Panc1 (cell line): ENCODE measurements at regions of chr20 and their contacts with region 1.

Region 1: DNA sequence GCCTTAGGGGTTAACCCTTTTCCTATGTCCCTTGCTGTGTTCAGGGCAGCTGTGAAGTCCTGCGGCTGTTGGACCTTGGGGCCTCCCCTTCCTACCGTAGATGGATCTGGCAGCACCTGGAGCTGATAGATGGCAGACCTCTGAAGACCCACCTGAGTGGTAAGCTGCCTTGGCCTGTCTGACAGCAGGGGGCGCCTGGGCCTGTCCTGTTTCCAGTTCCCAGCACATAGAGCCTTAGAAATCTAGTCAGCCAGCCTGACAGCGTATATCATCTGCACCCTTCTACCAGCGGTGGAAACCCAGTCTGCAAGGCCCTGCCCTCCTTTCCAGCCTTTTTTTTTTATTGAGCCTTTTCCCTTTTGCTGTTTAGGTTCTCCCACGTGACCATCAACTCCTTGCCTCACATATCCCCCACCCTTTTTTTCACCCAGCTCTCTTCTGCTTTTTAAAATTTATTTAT is 26.6 kb downstream of the CNBD2 start:
- DNase-seq: peak; percentile 69
- ATAC-seq: peak; percentile 96
- H3K4me3 ChIP-seq: no peak overlapping the region
- H3K27ac ChIP-seq: no peak overlapping the region
- H3K4me1 ChIP-seq: no peaks in the 10 kb centered on the region; the same call in 1 of the 2 replicates
- H3K27me3 ChIP-seq: no peaks in the 10 kb centered on the region
- CTCF ChIP-seq: peak; percentile 95

Region 2: DNA sequence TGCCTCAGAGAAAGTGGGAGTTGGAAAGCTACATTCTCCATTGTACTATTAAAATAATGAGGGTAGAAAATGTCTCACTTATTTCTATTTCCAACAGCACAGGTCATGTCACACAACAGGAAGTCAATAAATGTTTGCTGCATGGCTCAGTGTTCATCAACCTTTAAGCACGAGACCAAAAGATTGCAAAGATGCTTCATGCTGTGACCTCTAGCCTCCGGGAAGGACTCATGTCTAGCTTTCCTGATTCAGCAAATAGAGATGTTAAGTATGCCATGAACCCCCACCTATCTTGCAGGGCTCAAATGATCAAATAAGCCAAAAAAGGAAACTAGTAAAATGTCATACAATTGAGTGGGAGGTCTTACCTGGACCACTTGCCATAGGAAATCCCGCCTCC is 1226.9 kb before region 1 on chr20:
- CTCF ChIA-PET with region 1: no interaction called
- POLR2A ChIA-PET with region 1: no interaction called
- in situ Hi-C with region 1: no loop called
- intact Hi-C with region 1: no loop called
- DNase-seq: no peak
- ATAC-seq: no peak
- H3K4me3 ChIP-seq: no peak overlapping the region
- H3K27ac ChIP-seq: no peak overlapping the region
- H3K4me1 ChIP-seq: no peaks in the 10 kb centered on the region
- H3K27me3 ChIP-seq: no peaks in the 10 kb centered on the region
- CTCF ChIP-seq: no peak

Region 3: DNA sequence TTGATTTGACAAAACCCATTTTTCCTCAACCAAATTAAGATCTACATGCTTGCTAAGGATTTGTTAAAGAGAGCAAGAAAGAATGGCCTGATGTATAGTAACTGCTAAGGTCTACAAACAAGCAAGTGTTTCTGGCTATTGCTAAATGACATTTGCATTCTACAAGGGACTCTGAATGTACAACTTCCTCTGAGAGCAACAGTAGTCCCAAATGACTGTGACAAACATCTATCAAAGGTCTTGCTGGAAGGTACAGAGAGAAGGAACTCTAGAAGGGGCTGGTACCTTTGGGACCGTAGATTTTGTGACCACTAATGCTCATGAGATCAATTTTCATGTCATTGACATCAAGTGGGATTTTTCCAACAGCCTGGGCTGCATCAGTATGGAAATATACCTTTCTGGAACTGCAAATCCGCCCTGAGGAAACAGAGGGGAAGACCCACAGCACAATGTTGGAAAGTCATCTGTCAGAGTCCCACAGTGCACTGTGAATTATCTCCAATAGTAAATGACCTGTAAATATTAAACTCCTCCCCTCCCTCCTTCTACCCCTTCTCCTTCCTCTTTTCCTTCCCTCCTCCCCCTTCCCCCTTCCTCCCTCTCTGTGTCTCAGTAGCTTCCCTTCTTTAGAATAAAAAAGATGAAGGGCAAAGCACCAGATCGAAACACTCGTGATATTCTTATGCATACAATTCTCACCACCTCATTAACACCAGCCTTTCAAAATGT is 314.4 kb before region 1 on chr20:
- CTCF ChIA-PET with region 1: no interaction called
- POLR2A ChIA-PET with region 1: no interaction called
- in situ Hi-C with region 1: no loop called
- intact Hi-C with region 1: no loop called
- DNase-seq: no peak
- ATAC-seq: no peak
- H3K4me3 ChIP-seq: no peak overlapping the region
- H3K27ac ChIP-seq: no peak overlapping the region
- H3K4me1 ChIP-seq: no peaks in the 10 kb centered on the region
- H3K27me3 ChIP-seq: no peaks in the 10 kb centered on the region
- CTCF ChIP-seq: no peak

Region 4: GRCh38 chr20:35831029-35831428 is 164.0 kb before region 1 on chr20:
- CTCF ChIA-PET with region 1: no interaction called
- POLR2A ChIA-PET with region 1: interaction called, 12 read pairs
- in situ Hi-C with region 1: no loop called
- intact Hi-C with region 1: no loop called
- DNase-seq: no peak
- ATAC-seq: no peak
- H3K4me3 ChIP-seq: no peak overlapping the region
- H3K27ac ChIP-seq: no peak overlapping the region
- H3K4me1 ChIP-seq: no peaks in the 10 kb centered on the region
- H3K27me3 ChIP-seq: no peaks in the 10 kb centered on the region
- CTCF ChIP-seq: no peak

Region 5: DNA sequence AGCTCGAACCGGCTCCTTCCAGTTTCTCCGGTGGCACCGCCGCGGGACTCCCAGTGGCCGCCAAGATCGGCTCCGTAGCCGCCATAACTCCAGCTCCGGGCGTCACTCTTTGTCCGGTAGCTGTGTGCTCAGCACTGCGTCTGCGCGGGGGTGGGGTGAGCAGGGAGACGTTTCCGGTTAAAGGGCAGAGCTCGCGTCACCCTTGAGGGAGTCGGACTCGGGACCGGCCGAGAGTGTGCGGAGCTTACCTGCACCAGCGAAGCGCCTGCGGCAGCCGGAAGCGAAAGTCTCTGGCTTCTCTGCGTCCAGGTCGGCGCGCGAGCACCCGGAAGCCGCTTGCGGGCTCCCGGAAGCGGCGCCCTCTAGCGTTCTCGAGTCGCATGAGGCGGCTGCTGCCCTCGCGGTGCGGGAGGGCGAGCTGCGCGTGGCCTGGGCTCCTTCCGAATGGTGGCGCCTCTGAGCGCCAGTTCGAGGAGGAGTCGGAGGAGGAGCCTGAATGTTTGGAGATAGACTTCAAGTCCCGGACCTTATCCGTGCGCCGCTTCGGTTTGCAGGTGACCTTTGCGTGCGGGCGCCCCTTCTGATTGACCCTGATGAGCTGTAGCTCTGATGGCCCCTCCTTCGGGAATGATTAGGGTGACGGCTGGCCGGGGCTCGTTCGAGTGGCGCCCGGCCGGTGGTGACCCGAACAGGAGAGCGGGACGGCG is 40.7 kb before region 1 on chr20 and contains the start of gene SCAND1:
- CTCF ChIA-PET with region 1: interaction called, 11 read pairs
- POLR2A ChIA-PET with region 1: no interaction called
- in situ Hi-C with region 1: no loop called
- intact Hi-C with region 1: no loop called
- DNase-seq: peak; percentile 93
- ATAC-seq: peak; percentile 95
- H3K4me3 ChIP-seq: peak within 1 kb of the TSS; percentile 85 to 95
- H3K27ac ChIP-seq: peak within 1 kb of the TSS; percentile 92
- H3K4me1 ChIP-seq: peaks cover 8% of the 10 kb centered on the region
- H3K27me3 ChIP-seq: no peaks in the 10 kb centered on the region
- CTCF ChIP-seq: peak; percentile 100
- total RNA-seq, gene SCAND1: 59.6 TPM

Region 6: DNA sequence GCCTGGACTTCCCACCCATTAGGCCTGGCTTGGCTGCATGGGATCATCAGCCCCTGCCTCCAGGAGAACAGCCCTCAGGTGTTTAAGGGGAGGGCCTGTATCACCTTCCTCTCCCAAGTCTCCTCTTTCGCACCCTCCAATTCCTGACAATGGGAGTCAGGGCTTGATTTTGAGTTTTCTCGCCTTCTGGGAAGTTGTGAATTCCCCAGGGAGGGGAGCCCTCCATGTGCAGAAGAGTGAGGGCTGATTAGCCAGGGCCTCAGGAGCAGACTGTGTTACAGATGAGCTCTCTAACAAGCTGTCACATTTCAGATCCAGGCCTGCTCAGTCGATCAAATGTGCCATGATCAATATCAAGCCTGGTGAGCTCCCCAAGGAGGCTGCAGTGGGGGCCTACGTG is 15.8 kb after region 1 on chr20:
- CTCF ChIA-PET with region 1: no interaction called
- POLR2A ChIA-PET with region 1: no interaction called
- in situ Hi-C with region 1: no loop called
- intact Hi-C with region 1: no loop called
- DNase-seq: no peak
- ATAC-seq: no peak
- H3K4me3 ChIP-seq: no peak overlapping the region
- H3K27ac ChIP-seq: no peak overlapping the region
- H3K4me1 ChIP-seq: no peaks in the 10 kb centered on the region
- H3K27me3 ChIP-seq: no peaks in the 10 kb centered on the region
- CTCF ChIP-seq: no peak

Region 7: GRCh38 chr20:36116807-36117441 is 121.9 kb after region 1 on chr20:
- CTCF ChIA-PET with region 1: interaction called, 10 read pairs
- POLR2A ChIA-PET with region 1: interaction called, 11 read pairs
- in situ Hi-C with region 1: no loop called
- intact Hi-C with region 1: no loop called
- DNase-seq: no peak
- ATAC-seq: no peak
- H3K4me3 ChIP-seq: no peak overlapping the region
- H3K27ac ChIP-seq: no peak overlapping the region
- H3K4me1 ChIP-seq: no peaks in the 10 kb centered on the region
- H3K27me3 ChIP-seq: peaks cover 2% of the 10 kb centered on the region; the same call in 1 of the 2 replicates
- CTCF ChIP-seq: no peak

Region 8: DNA sequence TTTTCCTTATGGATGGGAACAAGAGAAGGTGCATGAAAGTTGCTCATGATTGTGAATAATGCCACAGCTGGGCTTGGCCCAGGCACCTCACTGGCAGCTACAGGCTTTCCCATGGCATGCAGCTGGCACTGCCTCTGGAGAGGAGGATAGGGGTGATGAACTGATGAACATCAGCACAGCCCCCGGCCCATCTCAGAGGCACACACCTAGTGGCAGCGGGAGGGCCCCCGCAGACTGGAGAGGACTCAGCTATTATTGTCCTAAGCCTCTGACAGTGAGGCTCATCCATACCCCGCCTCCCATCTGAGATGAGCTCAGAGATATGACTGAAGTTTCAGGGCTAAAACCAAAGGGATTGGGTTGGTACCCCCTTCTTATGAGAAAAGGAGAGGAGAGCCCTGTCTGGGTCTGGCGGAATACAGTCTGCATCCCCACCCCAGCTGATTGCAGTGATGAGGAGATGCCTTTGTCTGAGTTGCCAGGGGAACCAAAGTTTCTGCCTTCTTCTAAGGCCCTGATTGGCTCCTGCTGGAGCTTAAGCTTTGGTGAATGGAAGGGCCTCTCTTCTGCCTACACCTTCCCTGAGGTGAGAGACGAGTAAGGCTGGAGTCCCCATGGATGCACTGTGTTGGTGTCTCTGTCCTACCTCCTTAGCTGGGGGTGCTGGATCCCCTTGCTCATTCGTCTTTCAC is 132.0 kb after region 1 on chr20:
- CTCF ChIA-PET with region 1: interaction called, 16 read pairs
- POLR2A ChIA-PET with region 1: no interaction called
- in situ Hi-C with region 1: no loop called
- intact Hi-C with region 1: no loop called
- DNase-seq: no peak
- ATAC-seq: no peak
- H3K4me3 ChIP-seq: no peak overlapping the region
- H3K27ac ChIP-seq: no peak overlapping the region
- H3K4me1 ChIP-seq: no peaks in the 10 kb centered on the region
- H3K27me3 ChIP-seq: no peaks in the 10 kb centered on the region
- CTCF ChIP-seq: no peak

Region 9: DNA sequence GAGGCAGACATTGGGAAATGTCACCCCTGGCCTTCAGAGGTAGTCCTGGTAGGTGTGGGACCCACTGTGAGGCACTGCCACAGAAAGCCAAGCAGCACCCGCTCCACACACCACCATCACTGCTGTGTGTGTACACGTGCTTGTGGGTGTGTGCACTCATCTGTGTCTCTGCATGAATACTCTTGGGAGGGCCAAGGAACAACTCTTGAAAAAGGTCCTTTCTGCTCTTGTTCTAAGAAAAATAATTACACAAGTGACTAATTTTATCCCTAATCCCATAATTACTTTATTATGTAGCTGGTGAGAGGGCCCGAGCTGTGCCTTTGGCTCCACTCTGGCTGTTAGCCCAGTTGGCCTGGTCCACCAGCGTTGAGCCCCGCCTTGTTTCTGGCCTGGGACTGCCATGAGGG is 137.8 kb after region 1 on chr20:
- CTCF ChIA-PET with region 1: interaction called, 121 read pairs
- POLR2A ChIA-PET with region 1: no interaction called
- in situ Hi-C with region 1: no loop called
- intact Hi-C with region 1: loop called (anchors 1 kb)
- DNase-seq: no peak
- ATAC-seq: no peak
- H3K4me3 ChIP-seq: no peak overlapping the region
- H3K27ac ChIP-seq: no peak overlapping the region
- H3K4me1 ChIP-seq: no peaks in the 10 kb centered on the region
- H3K27me3 ChIP-seq: no peaks in the 10 kb centered on the region
- CTCF ChIP-seq: no peak